A673 (cell line): ENCODE measurements at regions of chr6 and their contacts with region 1.

Region 1: GRCh38 chr6:107114213-107114905 is 956 bp downstream of the BEND3 start:
- DNase-seq: peak; percentile 90
- H3K4me3 ChIP-seq: peak overlapping the region; percentile 72
- H3K27ac ChIP-seq: peak overlapping the region; percentile 77
- H3K4me1 ChIP-seq: peaks cover 16% of the 10 kb centered on the region
- H3K27me3 ChIP-seq: no peaks in the 10 kb centered on the region
- CTCF ChIP-seq: peak; percentile 56

Region 2: GRCh38 chr6:107026965-107027364 is 87.4 kb before region 1 on chr6:
- CTCF ChIA-PET with region 1: no interaction called
- POLR2A ChIA-PET with region 1: no interaction called
- intact Hi-C with region 1: loop called (anchors 5 kb)
- DNase-seq: no peak
- H3K4me3 ChIP-seq: no peak overlapping the region
- H3K27ac ChIP-seq: no peak overlapping the region
- H3K4me1 ChIP-seq: no peaks in the 10 kb centered on the region
- H3K27me3 ChIP-seq: no peaks in the 10 kb centered on the region
- CTCF ChIP-seq: no peak

Region 3: GRCh38 chr6:107082045-107082444 is 32.3 kb before region 1 on chr6:
- CTCF ChIA-PET with region 1: no interaction called
- POLR2A ChIA-PET with region 1: interaction called, 11 read pairs
- intact Hi-C with region 1: no loop called
- DNase-seq: no peak
- H3K4me3 ChIP-seq: no peak overlapping the region
- H3K27ac ChIP-seq: no peak overlapping the region
- H3K4me1 ChIP-seq: no peaks in the 10 kb centered on the region
- H3K27me3 ChIP-seq: no peaks in the 10 kb centered on the region
- CTCF ChIP-seq: no peak

Region 4: GRCh38 chr6:107102414-107102990 is 11.9 kb before region 1 on chr6:
- CTCF ChIA-PET with region 1: no interaction called
- POLR2A ChIA-PET with region 1: interaction called, 10 read pairs
- intact Hi-C with region 1: no loop called
- DNase-seq: no peak
- H3K4me3 ChIP-seq: no peak overlapping the region
- H3K27ac ChIP-seq: no peak overlapping the region
- H3K4me1 ChIP-seq: no peaks in the 10 kb centered on the region
- H3K27me3 ChIP-seq: no peaks in the 10 kb centered on the region
- CTCF ChIP-seq: no peak

Region 5: GRCh38 chr6:107154131-107154800 is 39.9 kb after region 1 on chr6:
- CTCF ChIA-PET with region 1: no interaction called
- POLR2A ChIA-PET with region 1: no interaction called
- intact Hi-C with region 1: no loop called
- DNase-seq: no peak
- H3K4me3 ChIP-seq: no peak overlapping the region
- H3K27ac ChIP-seq: no peak overlapping the region
- H3K4me1 ChIP-seq: no peaks in the 10 kb centered on the region
- H3K27me3 ChIP-seq: no peaks in the 10 kb centered on the region
- CTCF ChIP-seq: no peak